ENCODE measurements at regions of chr14 and their contacts with region 1.

Region 1: DNA sequence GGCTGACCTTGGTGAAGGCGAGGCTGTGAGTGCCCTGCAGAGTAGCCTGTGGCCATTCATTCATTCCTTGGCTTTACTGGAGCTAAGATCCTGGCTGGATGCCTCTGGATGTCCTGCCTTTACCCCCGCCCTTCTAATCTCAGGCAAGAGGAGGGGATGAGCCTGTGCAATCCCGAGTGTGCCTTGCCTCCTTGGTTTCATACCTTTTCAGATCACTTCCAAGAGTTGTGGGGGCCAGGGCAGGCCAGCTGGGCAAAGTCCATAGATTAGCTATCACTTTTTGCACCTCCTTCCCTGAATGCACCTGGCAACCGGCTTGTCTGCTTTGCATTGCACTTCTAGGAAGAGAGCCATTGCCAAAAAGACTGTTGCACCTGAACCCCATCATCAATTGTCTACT is 1.5 kb downstream of the VRTN start:
- DNase-seq: no peak
- ATAC-seq: no peak
- H3K4me3 ChIP-seq: no peak overlapping the region
- H3K27ac ChIP-seq: no peak overlapping the region
- H3K4me1 ChIP-seq: no peaks in the 10 kb centered on the region
- H3K27me3 ChIP-seq: peaks cover 59% of the 10 kb centered on the region
- CTCF ChIP-seq: no peak
- POLR2A ChIP-seq: no peak
- RAD21 ChIP-seq: no peak

Region 2: DNA sequence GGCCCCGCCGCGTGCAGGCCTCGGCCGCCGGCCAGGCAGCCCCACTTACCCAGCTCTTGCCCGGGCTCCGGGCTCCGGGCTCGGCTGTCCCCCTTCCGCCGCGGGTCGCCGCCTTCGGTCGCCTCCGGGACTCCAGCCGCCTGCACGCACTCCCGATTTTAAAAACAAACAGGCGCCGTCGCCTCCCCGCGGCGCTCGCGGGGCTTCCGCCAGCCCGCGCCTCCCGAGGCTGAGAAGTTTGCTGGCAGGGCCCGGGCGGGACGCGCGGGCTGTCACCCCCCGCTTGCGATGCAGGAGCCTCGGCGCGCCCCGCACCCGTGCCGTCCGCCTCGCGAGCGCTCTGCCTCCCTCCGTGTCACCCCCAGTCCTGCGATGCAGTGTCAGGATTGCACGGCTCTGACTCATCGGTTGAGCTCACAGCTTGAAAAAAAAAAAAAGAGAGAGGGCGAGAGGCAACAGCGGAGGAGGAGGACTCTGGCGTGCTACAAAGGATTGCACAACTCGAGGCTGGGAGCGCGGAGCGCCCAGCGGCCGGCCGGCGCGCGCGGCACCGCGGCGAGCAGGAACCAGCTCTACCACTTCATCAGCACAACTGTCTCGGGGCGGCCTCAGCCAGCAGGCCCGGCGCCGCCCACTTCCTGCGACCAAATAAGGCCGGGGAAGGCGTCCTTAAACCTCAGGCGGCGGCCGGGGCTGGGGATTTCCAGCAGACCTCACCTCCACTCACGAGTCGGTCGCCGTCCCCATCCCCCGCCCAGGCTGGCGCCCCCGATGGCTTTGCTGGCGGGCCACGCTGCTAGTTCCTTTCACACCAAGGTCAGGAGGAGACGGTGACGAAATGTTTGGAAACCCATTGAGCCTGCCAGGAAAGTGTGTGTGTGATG is 589.8 kb before region 1 on chr14:
- CTCF ChIA-PET with region 1: no interaction called
- POLR2A ChIA-PET with region 1: no interaction called
- dilution Hi-C with region 1: no loop called
- in situ Hi-C with region 1: no loop called
- intact Hi-C with region 1: no loop called
- DNase-seq: peak; percentile 99
- ATAC-seq: peak; percentile 85
- H3K4me3 ChIP-seq: peak overlapping the region; percentile 89
- H3K27ac ChIP-seq: peak overlapping the region; percentile 80
- H3K4me1 ChIP-seq: peaks cover 45% of the 10 kb centered on the region
- H3K27me3 ChIP-seq: no peaks in the 10 kb centered on the region
- CTCF ChIP-seq: no peak
- POLR2A ChIP-seq: peak; percentile 87
- RAD21 ChIP-seq: peak; percentile 35

Region 3: DNA sequence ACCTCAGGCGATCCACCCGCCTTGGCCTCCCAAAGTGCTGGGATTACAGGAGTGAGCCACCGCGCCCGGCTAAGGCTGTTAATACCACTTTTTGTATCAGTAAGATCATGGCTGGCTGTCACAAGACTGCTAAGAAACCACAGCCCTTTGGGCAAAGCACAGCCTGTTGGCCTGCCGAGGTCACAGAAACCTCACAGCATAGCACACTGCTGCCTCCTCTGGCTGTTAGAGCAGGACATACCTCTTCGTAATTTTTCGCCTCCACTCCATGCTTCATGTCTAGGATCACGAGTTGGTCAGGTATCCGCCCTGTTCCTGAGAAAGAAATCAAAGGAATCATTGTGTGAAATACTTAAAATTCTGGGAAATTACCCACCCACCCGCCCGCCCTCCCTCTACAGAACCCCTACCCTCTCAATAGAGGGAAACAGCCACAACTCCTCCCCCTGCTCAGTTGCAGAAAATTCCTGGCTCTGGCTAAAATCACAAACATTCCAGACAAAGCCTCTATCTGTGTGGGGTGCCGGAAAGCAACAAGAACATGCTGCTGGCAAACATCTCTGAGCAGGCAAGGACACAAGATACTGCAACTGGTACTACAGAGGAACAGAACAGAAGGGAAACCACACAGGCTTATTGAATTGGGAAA is 797.8 kb after region 1 on chr14:
- CTCF ChIA-PET with region 1: no interaction called
- POLR2A ChIA-PET with region 1: interaction called, 15 read pairs
- dilution Hi-C with region 1: no loop called
- in situ Hi-C with region 1: no loop called
- intact Hi-C with region 1: no loop called
- DNase-seq: peak; percentile 72
- ATAC-seq: peak; percentile 93
- H3K4me3 ChIP-seq: no peak overlapping the region
- H3K27ac ChIP-seq: peak overlapping the region; percentile 24; the same call in 1 of the 2 replicates
- H3K4me1 ChIP-seq: peaks cover 2% of the 10 kb centered on the region; the same call in 1 of the 2 replicates
- H3K27me3 ChIP-seq: no peaks in the 10 kb centered on the region
- CTCF ChIP-seq: peak; percentile 48
- POLR2A ChIP-seq: no peak
- RAD21 ChIP-seq: peak; percentile 48